ENCODE measurements at regions of chr14 and their contacts with region 1.

Region 1: DNA sequence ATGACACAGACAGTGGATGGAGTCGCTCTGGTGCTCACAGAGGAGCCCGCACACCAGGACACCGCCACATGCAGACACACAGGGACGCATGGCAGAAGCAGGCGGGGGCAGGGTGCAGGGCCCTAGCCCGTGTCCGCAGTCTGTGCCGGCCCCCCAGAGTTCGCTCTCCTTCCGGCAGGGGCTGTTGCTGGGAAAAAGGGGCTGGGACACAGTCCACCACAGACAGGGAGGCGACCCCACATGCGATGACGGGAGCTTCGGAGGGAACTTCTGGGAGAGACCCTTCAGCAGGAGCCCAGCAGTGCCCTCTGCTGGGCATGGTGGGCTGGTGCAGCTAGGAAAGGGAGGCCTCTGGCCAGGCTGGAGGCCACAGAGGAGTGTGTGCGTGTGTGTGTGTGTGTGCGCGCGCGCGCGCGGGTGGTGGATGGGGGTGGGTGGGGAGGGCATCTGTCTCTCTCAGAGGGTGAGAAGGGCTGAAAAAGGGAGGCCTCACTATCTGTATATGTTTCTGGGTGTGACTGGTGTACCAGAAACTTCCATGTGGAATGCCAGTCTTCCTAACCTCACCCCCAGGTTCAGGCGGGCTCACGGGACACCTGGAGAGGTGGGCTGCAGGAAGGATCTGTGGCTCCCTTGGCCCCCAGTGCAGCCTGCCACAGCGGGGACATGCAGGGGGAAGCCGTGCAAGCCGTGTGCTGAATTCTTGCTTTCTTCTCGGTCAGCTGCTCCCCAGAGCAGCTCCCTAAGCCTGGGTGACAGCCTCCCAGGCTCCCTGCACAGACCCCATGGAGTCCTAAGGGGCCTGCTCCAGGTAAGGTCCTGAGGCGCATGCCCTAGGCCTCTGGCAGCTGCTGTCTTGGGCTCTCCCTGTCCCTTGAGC is 60.7 kb downstream of the PLEKHG3 start:
- DNase-seq: peak; percentile 51 to 86 (median 67)
- H3K4me3 ChIP-seq: peak overlapping the region in 58 of 59 donors; percentile 8 to 66 (median 44)
- H3K27ac ChIP-seq: peak overlapping the region in 54 of 59 donors; percentile 34 to 93 (median 82)
- H3K27me3 ChIP-seq: no peaks in the 10 kb centered on the region
- CTCF ChIP-seq: peak; percentile 65 to 97 (median 89)

Region 2: DNA sequence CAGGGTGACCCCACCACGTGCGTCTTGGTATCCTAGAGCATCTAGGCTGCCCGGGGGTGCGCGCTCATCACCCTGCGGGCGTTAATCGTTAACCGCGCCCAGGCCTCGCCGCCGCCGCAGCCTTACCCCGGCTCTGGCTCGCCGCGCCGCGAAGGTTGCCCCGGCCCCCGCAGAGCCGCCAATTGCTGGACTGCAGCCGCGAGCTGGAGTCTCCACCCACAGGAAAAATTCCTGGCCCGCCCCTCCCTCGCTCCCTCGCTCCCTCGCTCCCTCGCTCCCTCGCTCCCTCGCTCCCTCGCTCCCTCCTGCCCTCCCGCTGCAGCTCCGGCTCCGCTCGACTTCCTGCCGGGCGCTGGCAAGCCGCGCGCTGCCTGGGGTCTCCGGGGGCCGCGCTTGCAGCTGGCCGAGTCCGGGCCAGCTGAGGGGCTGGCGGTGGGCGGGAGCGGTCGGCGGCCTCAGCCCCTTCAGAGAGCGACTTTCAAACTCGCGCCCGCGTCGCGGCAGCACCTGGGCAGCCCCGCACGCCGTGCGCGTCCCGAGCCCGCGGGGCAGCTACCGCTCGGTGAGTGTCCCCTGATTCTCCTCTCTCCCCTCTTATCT is 60.6 kb before region 1 on chr14 and contains the start of gene PLEKHG3:
- intact Hi-C with region 1: loop called in 1 of 2 experiments (anchors 1 kb)
- DNase-seq: peak; percentile 67 to 90 (median 80)
- H3K4me3 ChIP-seq: peak within 1 kb of the TSS; percentile 45 to 96 (median 85)
- H3K27ac ChIP-seq: peak within 1 kb of the TSS; percentile 84 to 99 (median 96)
- H3K27me3 ChIP-seq: no peaks in the 10 kb centered on the region
- CTCF ChIP-seq: peak in 41 of 56 donors; percentile 5 to 52 (median 23)
- total RNA-seq, gene PLEKHG3: 27.1 to 361 (median 85.0) TPM

Measured in dorsolateral prefrontal cortex (tissue), 120 donors.